Heart right ventricle (tissue), 16 donors: ENCODE measurements at regions of chr5 and their contacts with region 1.

Region 1: DNA sequence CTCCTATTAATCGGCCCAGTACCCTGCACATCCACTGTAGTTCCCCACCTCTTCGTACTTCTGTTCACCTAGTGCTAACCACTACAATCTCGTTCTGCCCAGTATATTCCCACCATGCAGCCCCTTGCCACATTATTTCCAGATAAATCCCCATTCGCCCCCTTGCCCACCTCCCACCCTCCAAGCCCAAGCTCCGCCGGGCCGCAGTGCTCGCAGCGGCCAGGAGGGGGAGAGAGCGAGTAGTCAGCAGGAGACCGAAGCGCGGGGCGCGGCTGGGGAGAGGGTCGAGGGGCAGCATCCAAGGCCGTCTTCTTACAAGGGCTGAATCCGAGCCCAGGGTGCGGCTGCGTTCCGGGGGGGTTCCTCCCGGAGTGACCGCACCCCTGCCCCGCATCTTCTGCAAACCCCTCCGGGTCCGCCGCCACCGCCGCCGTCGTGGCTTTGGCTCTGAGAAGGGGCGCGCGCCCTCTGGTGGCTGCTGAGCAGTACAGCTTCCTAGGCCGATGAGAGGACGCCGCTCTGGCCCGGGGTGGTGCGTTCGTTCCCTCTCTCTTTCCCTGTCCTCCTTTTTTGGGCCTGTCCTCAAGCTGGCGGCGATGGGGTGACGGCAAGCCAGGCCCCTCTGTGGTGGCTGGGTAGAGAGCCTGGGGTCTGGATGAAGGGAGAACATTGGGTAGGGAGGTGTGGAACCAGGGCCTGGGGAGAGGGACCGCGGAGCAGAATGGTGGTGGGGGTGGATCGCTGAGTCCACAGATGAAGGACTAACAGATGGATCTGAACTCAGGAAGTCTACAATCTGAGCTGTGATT is 30.0 kb upstream of the PSD2 start:
- DNase-seq: peak; percentile 73 to 86
- ATAC-seq: peak; percentile 84 to 95 (median 90)
- H3K4me3 ChIP-seq: peak overlapping the region; percentile 16 to 65 (median 53)
- H3K27ac ChIP-seq: peak overlapping the region in 3 of 10 donors; percentile 2 to 67 (median 3)
- H3K4me1 ChIP-seq: peaks cover 5 to 29% (median 18%) of the 10 kb centered on the region in 9 donors
- H3K27me3 ChIP-seq: peaks cover 4 to 28% (median 23%) of the 10 kb centered on the region in 7 donors
- CTCF ChIP-seq: peak; percentile 92 to 99 (median 98)

Region 2: DNA sequence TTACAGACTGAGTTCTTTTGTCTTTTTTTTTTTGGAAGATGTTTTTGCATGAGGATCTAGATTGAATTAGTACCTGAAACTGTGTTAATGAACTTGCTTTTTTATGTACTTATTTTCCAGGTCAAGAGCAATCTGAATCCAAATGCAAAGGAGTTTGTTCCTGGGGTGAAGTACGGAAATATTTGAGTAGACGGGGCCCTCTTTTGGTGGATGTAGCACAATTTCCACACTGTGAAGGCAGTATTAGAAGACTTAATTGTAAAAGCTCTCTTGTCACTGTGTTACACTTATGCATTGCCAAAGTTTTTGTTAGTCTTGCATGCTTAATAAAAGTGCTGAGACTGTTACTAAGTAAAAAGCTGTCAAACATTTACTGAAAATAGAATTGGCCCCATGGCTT is 397.0 kb before region 1 on chr5:
- intact Hi-C with region 1: no loop called
- DNase-seq: no peak
- ATAC-seq: peak in 2 of 8 donors; percentile 17 to 21
- H3K4me3 ChIP-seq: no peak overlapping the region
- H3K27ac ChIP-seq: peak overlapping the region in 1 of 10 donors; percentile 53
- H3K4me1 ChIP-seq: peaks cover 0 to 30% (median 14%) of the 10 kb centered on the region in 9 donors
- H3K27me3 ChIP-seq: no peaks in the 10 kb centered on the region
- CTCF ChIP-seq: peak in 2 of 9 donors; percentile 10 to 24

Region 3: GRCh38 chr5:139468421-139468931 is 297.1 kb before region 1 on chr5:
- intact Hi-C with region 1: no loop called
- DNase-seq: no peak
- ATAC-seq: peak in 1 of 8 donors; percentile 36
- H3K4me3 ChIP-seq: no peak overlapping the region
- H3K27ac ChIP-seq: no peak overlapping the region
- H3K4me1 ChIP-seq: peaks cover 0 to 36% (median 16%) of the 10 kb centered on the region in 9 donors
- H3K27me3 ChIP-seq: no peaks in the 10 kb centered on the region
- CTCF ChIP-seq: no peak

Region 4: GRCh38 chr5:139690064-139690802 is 75.4 kb before region 1 on chr5:
- intact Hi-C with region 1: loop called in 3 of 10 experiments (anchors 5 kb)
- DNase-seq: no peak
- ATAC-seq: peak in 7 of 8 donors; percentile 1 to 38 (median 32)
- H3K4me3 ChIP-seq: peak overlapping the region in 1 of 10 donors; percentile 5
- H3K27ac ChIP-seq: peak overlapping the region in 7 of 10 donors; percentile 5 to 73 (median 43)
- H3K4me1 ChIP-seq: peaks cover 17 to 85% (median 54%) of the 10 kb centered on the region in 9 donors
- H3K27me3 ChIP-seq: no peaks in the 10 kb centered on the region
- CTCF ChIP-seq: peak; percentile 22 to 79 (median 70)

Region 5: DNA sequence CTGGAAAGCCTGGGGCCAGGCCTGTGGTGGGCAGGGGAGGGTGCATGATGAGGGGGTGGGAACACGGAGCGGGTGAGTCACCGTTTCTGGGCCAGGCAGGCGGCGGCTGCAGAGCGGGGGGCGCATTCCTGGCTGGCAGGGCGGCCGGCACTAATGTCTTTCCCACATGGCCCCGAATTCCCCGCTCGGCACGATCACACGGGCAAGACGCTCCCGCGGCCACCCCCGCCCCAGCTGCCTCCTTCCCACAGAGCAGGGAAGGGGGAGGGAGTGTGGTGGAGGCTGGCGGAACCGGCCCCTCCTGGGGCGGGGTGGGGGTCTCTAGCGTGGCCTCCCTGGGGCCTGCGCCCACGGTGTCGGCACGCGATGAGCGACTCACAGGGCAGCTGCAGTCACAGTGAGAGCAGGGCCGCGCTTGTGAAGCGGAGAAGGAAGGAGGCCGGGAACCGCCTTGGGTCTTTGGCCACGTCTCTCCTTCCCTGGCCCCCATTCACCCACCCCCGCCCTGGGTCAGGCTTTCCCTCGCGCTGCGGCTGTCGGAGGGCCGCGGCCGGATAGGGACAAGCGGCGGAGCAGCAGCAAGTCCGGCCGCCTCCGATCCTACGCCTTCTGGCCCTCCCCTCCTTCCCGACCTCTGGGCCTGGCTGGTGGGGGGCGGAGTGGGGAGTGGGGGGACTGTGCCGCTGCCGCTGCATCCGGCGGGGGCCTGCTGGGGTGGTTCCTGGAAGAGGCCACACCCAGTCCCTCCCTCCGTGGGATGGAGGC is 68.5 kb before region 1 on chr5:
- intact Hi-C with region 1: loop called in 4 of 10 experiments (anchors 5 kb)
- DNase-seq: peak; percentile 85 to 87
- ATAC-seq: peak; percentile 79 to 90 (median 83)
- H3K4me3 ChIP-seq: peak overlapping the region; percentile 20 to 63 (median 45)
- H3K27ac ChIP-seq: peak overlapping the region; percentile 87 to 98 (median 90)
- H3K4me1 ChIP-seq: peaks cover 15 to 78% (median 51%) of the 10 kb centered on the region in 9 donors
- H3K27me3 ChIP-seq: peaks cover 0 to 36% (median 0%) of the 10 kb centered on the region in 7 donors
- CTCF ChIP-seq: no peak

Region 6: DNA sequence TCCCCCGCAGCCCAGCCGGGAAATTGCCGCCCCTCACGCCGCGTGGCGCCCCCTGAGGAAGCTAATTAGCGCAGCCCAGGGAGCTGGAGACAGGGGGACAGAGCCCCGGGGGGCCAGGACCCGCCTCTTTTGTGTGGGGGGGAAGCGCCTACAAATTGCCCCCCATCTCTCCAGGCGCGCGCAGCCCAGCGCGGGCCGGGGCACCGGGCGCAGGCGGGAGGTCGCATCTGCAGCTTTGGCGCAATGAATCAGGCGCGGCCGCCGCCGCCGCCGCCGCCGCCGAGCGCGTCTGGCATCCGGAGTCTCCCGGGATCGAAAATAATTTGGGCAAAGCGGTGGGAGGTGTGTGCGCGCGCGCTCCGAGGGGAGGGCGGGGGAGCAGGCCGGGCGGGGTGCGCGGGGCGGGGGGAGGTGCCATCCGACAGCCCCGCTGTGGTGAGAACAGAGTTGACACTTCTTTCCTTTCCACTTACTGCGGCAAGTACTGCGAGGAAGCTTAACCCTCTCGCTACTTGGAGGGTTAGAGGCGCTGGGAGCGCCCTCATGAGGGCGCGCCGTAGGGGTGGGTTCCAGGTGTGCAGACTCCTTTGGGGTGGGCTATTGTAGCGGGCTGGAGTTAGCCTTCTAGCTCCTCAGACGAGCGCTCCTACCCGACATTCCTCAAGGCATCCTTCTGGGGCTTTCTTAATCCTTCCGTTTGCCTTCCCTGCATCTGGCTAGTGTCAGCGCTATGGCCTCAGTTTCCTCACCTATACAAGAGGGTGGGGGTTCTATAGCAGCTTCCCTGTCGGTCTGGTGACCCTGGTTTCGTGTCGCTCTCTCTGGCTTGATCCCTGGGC is 54.3 kb before region 1 on chr5:
- intact Hi-C with region 1: loop called in 4 of 10 experiments (anchors 5 kb)
- DNase-seq: peak in 1 of 2 donors; percentile 45
- ATAC-seq: peak in 7 of 8 donors; percentile 2 to 21 (median 6)
- H3K4me3 ChIP-seq: peak overlapping the region; percentile 18 to 65 (median 60)
- H3K27ac ChIP-seq: peak overlapping the region in 7 of 10 donors; percentile 11 to 88 (median 85)
- H3K4me1 ChIP-seq: peaks cover 12 to 40% (median 36%) of the 10 kb centered on the region in 9 donors
- H3K27me3 ChIP-seq: peaks cover 0 to 44% (median 0%) of the 10 kb centered on the region in 7 donors
- CTCF ChIP-seq: peak in 2 of 9 donors; percentile 10 to 24

Region 7: GRCh38 chr5:139925650-139926640 is 160.3 kb after region 1 on chr5:
- intact Hi-C with region 1: no loop called
- DNase-seq: no peak
- ATAC-seq: peak in 1 of 8 donors; percentile 53
- H3K4me3 ChIP-seq: no peak overlapping the region
- H3K27ac ChIP-seq: no peak overlapping the region
- H3K4me1 ChIP-seq: no peaks in the 10 kb centered on the region
- H3K27me3 ChIP-seq: no peaks in the 10 kb centered on the region
- CTCF ChIP-seq: no peak